ENCODE measurements at regions of chr2 and their contacts with region 1.

Region 1: GRCh38 chr2:106642679-106643078 is 155.5 kb downstream of the CD8B2 start:
- DNase-seq: no peak
- H3K4me3 ChIP-seq: no peak overlapping the region
- H3K27ac ChIP-seq: no peak overlapping the region
- H3K4me1 ChIP-seq: peaks cover 0 to 3% (median 0%) of the 10 kb centered on the region in 3 donors
- H3K27me3 ChIP-seq: no peaks in the 10 kb centered on the region
- CTCF ChIP-seq: no peak

Region 2: GRCh38 chr2:107669335-107669734 is 1026.7 kb after region 1 on chr2:
- intact Hi-C with region 1: loop called (anchors 10 kb)
- DNase-seq: peak in 2 of 5 donors; percentile 13 to 46
- H3K4me3 ChIP-seq: no peak overlapping the region
- H3K27ac ChIP-seq: no peak overlapping the region
- H3K4me1 ChIP-seq: no peaks in the 10 kb centered on the region
- H3K27me3 ChIP-seq: no peaks in the 10 kb centered on the region
- CTCF ChIP-seq: peak; percentile 7

Measured in kidney (tissue), 22 donors.